HEK293 (cell line): ENCODE measurements at regions of chr1 and their contacts with region 1.

Region 1: GRCh38 chr1:153967082-153968000 is at the start of gene CREB3L4:
- H3K4me3 ChIP-seq: peak within 1 kb of the TSS; percentile 51
- H3K27ac ChIP-seq: peak within 1 kb of the TSS; percentile 87
- H3K4me1 ChIP-seq: peaks cover 3% of the 10 kb centered on the region; the same call in 1 of the 2 replicates
- CTCF ChIP-seq: peak; percentile 97

Region 2: GRCh38 chr1:153727463-153728304 is 239.7 kb before region 1 on chr1 and contains the start of gene INTS3:
- CTCF ChIA-PET with region 1: no interaction called
- POLR2A ChIA-PET with region 1: interaction called, 10 read pairs
- H3K4me3 ChIP-seq: peak within 1 kb of the TSS; percentile 76
- H3K27ac ChIP-seq: peak within 1 kb of the TSS; percentile 85
- H3K4me1 ChIP-seq: peaks cover 3% of the 10 kb centered on the region; the same call in 1 of the 2 replicates
- CTCF ChIP-seq: no peak

Region 3: DNA sequence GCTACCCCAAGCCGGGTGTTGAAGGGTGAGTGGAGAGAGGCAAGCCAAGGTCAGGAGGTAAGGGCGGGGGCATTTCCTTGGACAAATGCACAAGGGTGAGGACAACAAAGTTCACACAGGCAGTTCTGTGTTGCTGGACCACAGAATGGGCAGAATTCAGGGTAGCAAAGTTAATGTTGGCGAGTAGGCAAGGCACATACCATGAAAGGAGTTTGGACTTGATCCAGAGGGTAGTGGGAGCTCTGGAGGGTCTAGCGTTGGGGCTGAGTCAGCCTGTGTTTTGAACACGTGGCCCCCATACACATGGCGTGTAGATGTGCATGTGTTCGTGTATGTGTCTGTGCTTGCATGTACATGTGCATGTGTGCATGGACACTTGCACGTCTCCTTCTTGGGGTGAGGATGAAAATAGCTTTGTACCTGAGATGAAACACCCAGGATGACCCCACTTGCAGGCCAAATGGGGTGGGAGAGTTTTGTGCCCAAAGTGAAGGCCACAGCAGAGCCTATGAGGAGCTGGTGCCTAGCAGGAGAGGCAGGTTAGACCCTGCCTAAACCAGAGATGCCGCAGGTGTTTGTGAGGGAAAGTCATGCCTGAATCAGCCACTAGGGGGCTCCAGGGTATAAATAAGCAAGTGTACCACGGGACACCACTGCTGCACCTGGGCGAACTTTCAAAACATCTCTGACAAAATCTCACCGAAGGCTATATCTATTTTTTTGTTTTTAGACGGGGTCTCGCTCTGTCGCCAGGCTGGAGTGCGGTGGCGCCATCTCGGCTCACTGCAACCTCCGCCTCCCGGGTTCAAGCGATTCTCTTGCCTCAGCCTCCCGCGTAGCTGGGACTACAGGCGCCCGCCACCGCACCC is 170.3 kb before region 1 on chr1:
- CTCF ChIA-PET with region 1: interaction called, 13 read pairs
- POLR2A ChIA-PET with region 1: interaction called, 5 read pairs
- H3K4me3 ChIP-seq: no peak overlapping the region
- H3K27ac ChIP-seq: no peak overlapping the region
- H3K4me1 ChIP-seq: no peaks in the 10 kb centered on the region
- CTCF ChIP-seq: peak; percentile 78

Region 4: GRCh38 chr1:153922972-153923925 is 44.1 kb before region 1 on chr1 and contains the start of gene GATAD2B:
- CTCF ChIA-PET with region 1: interaction called, 3 read pairs
- POLR2A ChIA-PET with region 1: interaction called, 21 read pairs
- H3K4me3 ChIP-seq: peak within 1 kb of the TSS; percentile 95
- H3K27ac ChIP-seq: peak within 1 kb of the TSS; percentile 78
- H3K4me1 ChIP-seq: peaks cover 4% of the 10 kb centered on the region
- CTCF ChIP-seq: no peak

Region 5: GRCh38 chr1:153928791-153929341 is 38.5 kb before region 1 on chr1:
- CTCF ChIA-PET with region 1: no interaction called
- POLR2A ChIA-PET with region 1: interaction called, 21 read pairs
- H3K4me3 ChIP-seq: no peak overlapping the region
- H3K27ac ChIP-seq: no peak overlapping the region
- H3K4me1 ChIP-seq: no peaks in the 10 kb centered on the region
- CTCF ChIP-seq: no peak

Region 6: GRCh38 chr1:153946622-153947241 is 20.6 kb before region 1 on chr1 and contains the start of gene DENND4B:
- CTCF ChIA-PET with region 1: interaction called, 8 read pairs
- POLR2A ChIA-PET with region 1: interaction called, 36 read pairs
- H3K4me3 ChIP-seq: peak within 1 kb of the TSS; percentile 74
- H3K27ac ChIP-seq: peak within 1 kb of the TSS; percentile 91
- H3K4me1 ChIP-seq: no peaks in the 10 kb centered on the region
- CTCF ChIP-seq: peak; percentile 92

Region 7: DNA sequence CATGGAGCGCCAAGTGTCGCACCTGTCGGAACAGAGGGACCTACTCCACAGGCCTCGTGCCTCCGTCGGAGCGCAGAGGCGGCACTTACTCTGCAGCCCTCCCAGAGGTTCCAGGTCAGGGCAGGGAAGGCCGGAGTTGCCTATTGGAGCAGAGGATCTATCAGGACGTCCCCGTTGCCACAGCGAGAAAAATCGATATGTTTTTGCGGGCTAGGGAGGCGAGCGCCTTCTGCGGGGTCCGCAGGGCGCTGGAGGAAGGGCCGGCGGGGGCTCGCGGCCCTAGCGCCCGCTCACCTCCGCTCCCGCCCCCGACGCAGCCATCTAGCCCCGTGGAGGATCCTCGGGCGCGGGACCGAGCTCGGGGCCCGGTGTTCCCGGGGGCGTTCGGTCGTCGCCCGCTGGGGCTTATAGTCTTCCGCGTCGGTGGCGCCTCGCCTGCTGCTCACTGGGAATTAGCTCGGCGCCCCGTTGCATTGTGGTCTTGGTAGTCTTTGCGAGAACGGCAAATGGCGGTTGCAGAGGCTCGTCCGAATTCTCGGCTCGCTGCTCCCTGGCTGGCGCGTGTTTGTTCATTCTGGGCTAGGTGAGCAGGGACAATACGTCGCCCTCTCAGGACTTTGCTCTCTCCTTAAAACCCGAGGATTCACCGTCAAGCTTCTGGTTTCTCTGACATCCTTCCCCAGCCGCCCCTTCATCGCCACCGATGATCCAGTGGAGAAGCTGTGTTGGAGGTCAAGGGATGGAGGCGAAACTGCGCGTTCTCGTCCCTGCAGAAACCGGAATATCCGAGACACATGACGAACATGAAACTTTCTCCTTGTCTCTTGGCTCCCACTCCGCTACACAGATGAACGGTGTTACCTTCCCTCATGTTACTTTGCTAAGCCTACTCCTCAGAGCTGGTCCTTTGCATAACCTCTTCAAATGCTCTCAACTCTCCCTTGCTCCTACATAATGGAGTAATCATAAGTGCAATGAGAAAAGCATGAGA is 10.2 kb after region 1 on chr1 and contains the start of gene JTB:
- CTCF ChIA-PET with region 1: interaction called, 19 read pairs
- POLR2A ChIA-PET with region 1: interaction called, 137 read pairs
- H3K4me3 ChIP-seq: peak within 1 kb of the TSS; percentile 90
- H3K27ac ChIP-seq: peak within 1 kb of the TSS; percentile 88
- H3K4me1 ChIP-seq: no peaks in the 10 kb centered on the region
- CTCF ChIP-seq: peak; percentile 6; the same call in 1 of the 2 replicates